ENCODE measurements at regions of chr10 and their contacts with region 1.

Region 1: GRCh38 chr10:84715911-84716310 is 387.5 kb downstream of the CCSER2 start:
- DNase-seq: peak; percentile 73
- H3K4me3 ChIP-seq: peak overlapping the region in 1 of 2 experiments; percentile 32; a peak in 1 of 4 replicates
- H3K27ac ChIP-seq: no peak overlapping the region
- H3K4me1 ChIP-seq: no peaks in the 10 kb centered on the region
- H3K27me3 ChIP-seq: no peaks in the 10 kb centered on the region
- CTCF ChIP-seq: peak; percentile 30; the same call in 1 of the 2 replicates
- EP300 ChIP-seq: no peak
- RAD21 ChIP-seq: peak; percentile 61

Region 2: GRCh38 chr10:84613336-84614021 is 102.4 kb before region 1 on chr10:
- CTCF ChIA-PET with region 1: interaction called, 17 read pairs
- POLR2A ChIA-PET with region 1: no interaction called
- DNase-seq: peak; percentile 63
- H3K4me3 ChIP-seq: peak overlapping the region in 1 of 2 experiments; percentile 43; a peak in 1 of 4 replicates
- H3K27ac ChIP-seq: no peak overlapping the region
- H3K4me1 ChIP-seq: no peaks in the 10 kb centered on the region; a peak in 1 of 4 replicates
- H3K27me3 ChIP-seq: no peaks in the 10 kb centered on the region
- CTCF ChIP-seq: 0 out of 2 replicates have a peak, but pooled peaks have one; percentile 17
- EP300 ChIP-seq: no peak
- RAD21 ChIP-seq: peak; percentile 75

Region 3: GRCh38 chr10:84698989-84699388 is 16.9 kb before region 1 on chr10:
- CTCF ChIA-PET with region 1: interaction called, 11 read pairs
- POLR2A ChIA-PET with region 1: no interaction called
- DNase-seq: no peak
- H3K4me3 ChIP-seq: no peak overlapping the region
- H3K27ac ChIP-seq: no peak overlapping the region
- H3K4me1 ChIP-seq: no peaks in the 10 kb centered on the region
- H3K27me3 ChIP-seq: no peaks in the 10 kb centered on the region
- CTCF ChIP-seq: no peak
- EP300 ChIP-seq: no peak
- RAD21 ChIP-seq: no peak

Region 4: GRCh38 chr10:84743483-84743882 is 27.6 kb after region 1 on chr10:
- CTCF ChIA-PET with region 1: interaction called, 10 read pairs
- POLR2A ChIA-PET with region 1: no interaction called
- DNase-seq: no peak
- H3K4me3 ChIP-seq: no peak overlapping the region
- H3K27ac ChIP-seq: no peak overlapping the region
- H3K4me1 ChIP-seq: no peaks in the 10 kb centered on the region
- H3K27me3 ChIP-seq: no peaks in the 10 kb centered on the region
- CTCF ChIP-seq: peak; percentile 16
- EP300 ChIP-seq: no peak
- RAD21 ChIP-seq: peak; percentile 15; the same call in 1 of the 2 replicates

Region 5: GRCh38 chr10:84820120-84820519 is 104.2 kb after region 1 on chr10:
- CTCF ChIA-PET with region 1: no interaction called
- POLR2A ChIA-PET with region 1: no interaction called
- DNase-seq: no peak
- H3K4me3 ChIP-seq: no peak overlapping the region
- H3K27ac ChIP-seq: no peak overlapping the region
- H3K4me1 ChIP-seq: peaks cover 0 to 8% of the 10 kb centered on the region in 2 experiments; a peak in 1 of 4 replicates
- H3K27me3 ChIP-seq: no peaks in the 10 kb centered on the region
- CTCF ChIP-seq: no peak
- EP300 ChIP-seq: no peak
- RAD21 ChIP-seq: no peak